Naive thymus-derived CD4-positive, alpha-beta T cell (primary cell): ENCODE measurements at regions of chr12 and their contacts with region 1.

Region 1: DNA sequence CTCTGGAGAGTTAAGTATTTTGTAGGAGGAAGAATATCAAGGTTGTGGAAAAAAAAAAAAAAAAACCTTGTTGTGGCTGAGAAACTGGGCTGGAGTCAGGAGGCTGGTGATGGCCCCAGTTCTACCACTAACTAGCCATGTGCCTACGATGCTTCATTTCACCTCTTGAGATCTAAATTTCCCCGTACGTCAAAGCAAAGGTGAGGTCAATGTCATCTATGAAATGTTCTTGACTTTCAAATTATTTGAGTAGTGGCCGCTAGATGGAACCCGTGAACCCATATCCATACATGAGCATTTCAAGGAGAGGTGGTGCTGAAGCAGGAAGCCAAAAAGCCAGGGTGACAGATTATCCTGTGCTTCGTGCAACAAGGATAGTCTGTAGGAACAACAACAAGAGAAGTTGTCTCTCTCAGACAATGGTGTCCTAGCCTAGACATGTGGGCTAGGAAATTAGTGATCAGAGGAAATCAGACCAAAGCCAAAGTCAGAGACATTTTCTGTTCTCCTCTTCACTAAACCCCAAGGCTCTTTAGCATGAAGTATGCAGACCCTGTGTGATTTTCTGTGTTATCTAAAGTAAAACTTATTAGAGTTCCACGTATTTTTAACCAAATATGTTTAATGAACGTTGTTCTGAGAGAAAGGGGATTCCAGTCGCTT is 95.5 kb upstream of the ETV6 start:
- DNase-seq: peak in 7 of 9 donors; percentile 41 to 66 (median 58)
- ATAC-seq: peak; percentile 81
- H3K4me3 ChIP-seq: no peak overlapping the region
- H3K4me3 Mint-ChIP-seq: peak overlapping the region in 8 of 10 donors; percentile 12 to 71 (median 36)
- H3K27ac ChIP-seq: no peak overlapping the region
- H3K27ac Mint-ChIP-seq: peak overlapping the region in 8 of 9 donors; percentile 38 to 94 (median 58)
- H3K4me1 ChIP-seq: peaks cover 0 to 15% of the 10 kb centered on the region in 2 donors
- H3K4me1 Mint-ChIP-seq: peaks cover 11 to 47% (median 32%) of the 10 kb centered on the region in 7 donors
- H3K27me3 ChIP-seq: no peaks in the 10 kb centered on the region
- H3K27me3 Mint-ChIP-seq: peaks cover 0 to 26% (median 0%) of the 10 kb centered on the region in 5 donors

Region 2: DNA sequence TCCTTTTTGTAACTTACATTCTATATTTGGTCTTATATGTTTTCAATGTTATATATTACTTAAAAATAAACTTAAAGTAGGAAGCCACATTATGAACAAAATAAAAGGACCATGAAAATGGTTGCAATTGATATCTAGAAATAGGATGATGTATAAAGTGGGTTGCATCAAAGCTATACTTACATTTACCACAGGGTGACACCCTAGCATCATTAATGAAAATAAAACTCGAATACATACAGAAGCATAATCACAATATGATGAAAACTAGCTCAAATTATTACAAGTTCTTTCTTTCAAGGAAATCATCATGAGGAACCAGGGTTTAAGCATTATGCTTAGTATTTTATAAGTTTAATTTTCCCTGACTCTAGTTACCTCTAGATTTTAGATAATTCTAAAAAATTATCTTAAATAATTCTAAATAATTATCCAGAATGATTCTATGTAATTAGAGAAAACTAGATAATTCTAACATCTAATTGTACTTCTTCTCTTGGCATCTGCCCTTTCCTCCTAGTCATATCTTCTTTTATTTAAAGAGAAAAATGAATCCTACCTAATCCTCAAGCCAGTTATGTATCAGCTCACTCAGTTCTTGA is 782.8 kb before region 1 on chr12:
- CTCF ChIA-PET with region 1: no interaction called
- POLR2A ChIA-PET with region 1: no interaction called
- intact Hi-C with region 1: loop called in 1 of 2 experiments (anchors 5 kb)
- DNase-seq: peak in 7 of 9 donors; percentile 9 to 56 (median 45)
- ATAC-seq: peak; percentile 63
- H3K4me3 ChIP-seq: no peak overlapping the region
- H3K4me3 Mint-ChIP-seq: no peak overlapping the region
- H3K27ac ChIP-seq: no peak overlapping the region
- H3K27ac Mint-ChIP-seq: no peak overlapping the region
- H3K4me1 ChIP-seq: no peaks in the 10 kb centered on the region
- H3K4me1 Mint-ChIP-seq: no peaks in the 10 kb centered on the region
- H3K27me3 ChIP-seq: no peaks in the 10 kb centered on the region
- H3K27me3 Mint-ChIP-seq: peaks cover 41 to 56% (median 52%) of the 10 kb centered on the region in 5 donors

Region 3: DNA sequence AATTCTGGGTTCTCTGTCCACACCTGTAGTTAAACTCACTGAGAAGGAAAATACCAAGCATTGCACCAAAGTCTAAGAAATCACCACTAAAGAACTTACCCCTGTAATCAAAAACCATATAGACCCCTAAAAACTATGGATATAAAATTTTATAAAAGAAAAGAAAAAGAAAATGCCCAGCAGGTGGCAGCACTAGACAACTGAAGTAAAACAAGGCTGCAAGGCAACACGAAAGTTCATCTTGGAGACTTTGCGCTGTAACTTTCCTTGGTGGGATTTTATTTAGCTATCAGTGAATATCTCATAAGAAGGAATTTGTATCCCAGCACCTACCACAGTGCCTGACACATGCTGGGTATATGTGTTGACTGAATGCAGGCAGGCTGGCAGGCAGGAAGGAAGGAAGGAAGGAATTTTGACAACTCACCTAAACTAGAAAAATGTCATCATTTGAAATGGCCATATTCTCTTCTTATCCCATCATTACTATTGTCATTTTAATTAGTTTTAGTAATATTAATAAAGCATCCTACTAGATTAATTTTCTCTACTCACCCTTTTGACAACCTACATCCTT is 27.3 kb after region 1 on chr12:
- CTCF ChIA-PET with region 1: interaction called, 7 read pairs
- POLR2A ChIA-PET with region 1: interaction called, 3 read pairs
- intact Hi-C with region 1: loop called (anchors 2 kb)
- DNase-seq: peak; percentile 22 to 73 (median 64)
- ATAC-seq: peak; percentile 60
- H3K4me3 ChIP-seq: no peak overlapping the region
- H3K4me3 Mint-ChIP-seq: peak overlapping the region in 1 of 10 donors; percentile 65
- H3K27ac ChIP-seq: no peak overlapping the region
- H3K27ac Mint-ChIP-seq: peak overlapping the region in 2 of 9 donors; percentile 28 to 88
- H3K4me1 ChIP-seq: no peaks in the 10 kb centered on the region
- H3K4me1 Mint-ChIP-seq: peaks cover 0 to 10% (median 4%) of the 10 kb centered on the region in 7 donors
- H3K27me3 ChIP-seq: no peaks in the 10 kb centered on the region
- H3K27me3 Mint-ChIP-seq: peaks cover 0 to 14% (median 0%) of the 10 kb centered on the region in 5 donors